Posterior cingulate gyrus (tissue), 11 donors: ENCODE measurements at regions of chr14 and their contacts with region 1.

Region 1: GRCh38 chr14:100375963-100376735 is 53.0 kb downstream of the SLC25A47 start:
- DNase-seq: peak; percentile 83 to 98 (median 89)

Region 2: GRCh38 chr14:100285021-100285912 is 90.9 kb before region 1 on chr14:
- intact Hi-C with region 1: loop called (anchors 5 kb)
- DNase-seq: peak in 7 of 10 donors; percentile 51 to 95 (median 76)

Region 3: DNA sequence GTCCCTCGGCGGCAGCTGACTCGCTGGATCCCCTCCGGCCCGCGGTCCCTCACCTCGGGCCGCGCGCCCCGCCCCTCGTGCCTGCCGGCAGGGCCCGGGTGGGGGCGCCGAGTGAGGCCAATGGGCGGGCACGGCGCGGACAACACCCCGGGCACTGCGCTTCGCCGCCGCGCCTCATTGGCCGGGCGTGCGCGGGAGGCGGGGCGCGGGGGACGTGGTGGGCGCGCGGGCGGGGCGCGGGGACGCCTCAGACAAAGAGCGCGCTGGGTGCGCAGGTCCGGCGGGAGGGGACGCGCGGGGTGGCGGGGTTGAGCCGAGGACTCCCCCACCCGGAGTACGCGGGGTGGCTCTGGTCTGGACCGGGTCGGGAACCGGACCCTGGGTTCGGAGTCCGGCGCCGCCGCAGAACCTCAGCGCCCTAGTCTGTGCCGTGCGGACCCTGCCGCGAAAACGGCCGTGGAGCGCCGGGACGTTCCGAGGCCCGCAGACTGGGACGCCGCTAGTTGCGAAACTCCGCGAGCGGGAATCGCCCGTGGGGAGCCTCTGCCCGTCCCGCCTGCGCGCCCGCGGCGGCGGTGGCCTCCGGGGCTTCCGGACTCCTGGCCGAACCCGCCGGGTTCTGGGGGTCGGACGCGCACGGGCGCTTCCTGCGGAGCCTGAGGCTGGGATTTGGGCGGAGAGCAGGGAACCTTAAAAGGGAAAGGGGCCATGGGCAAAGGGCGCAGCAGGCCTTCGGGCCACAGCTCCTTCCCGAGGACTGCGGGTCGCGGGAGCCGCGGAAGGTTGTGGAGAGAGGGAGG is 69.5 kb before region 1 on chr14 and contains the start of gene SLC25A29:
- intact Hi-C with region 1: loop called (anchors 5 kb)
- DNase-seq: peak; percentile 86 to 99 (median 91)

Region 4: DNA sequence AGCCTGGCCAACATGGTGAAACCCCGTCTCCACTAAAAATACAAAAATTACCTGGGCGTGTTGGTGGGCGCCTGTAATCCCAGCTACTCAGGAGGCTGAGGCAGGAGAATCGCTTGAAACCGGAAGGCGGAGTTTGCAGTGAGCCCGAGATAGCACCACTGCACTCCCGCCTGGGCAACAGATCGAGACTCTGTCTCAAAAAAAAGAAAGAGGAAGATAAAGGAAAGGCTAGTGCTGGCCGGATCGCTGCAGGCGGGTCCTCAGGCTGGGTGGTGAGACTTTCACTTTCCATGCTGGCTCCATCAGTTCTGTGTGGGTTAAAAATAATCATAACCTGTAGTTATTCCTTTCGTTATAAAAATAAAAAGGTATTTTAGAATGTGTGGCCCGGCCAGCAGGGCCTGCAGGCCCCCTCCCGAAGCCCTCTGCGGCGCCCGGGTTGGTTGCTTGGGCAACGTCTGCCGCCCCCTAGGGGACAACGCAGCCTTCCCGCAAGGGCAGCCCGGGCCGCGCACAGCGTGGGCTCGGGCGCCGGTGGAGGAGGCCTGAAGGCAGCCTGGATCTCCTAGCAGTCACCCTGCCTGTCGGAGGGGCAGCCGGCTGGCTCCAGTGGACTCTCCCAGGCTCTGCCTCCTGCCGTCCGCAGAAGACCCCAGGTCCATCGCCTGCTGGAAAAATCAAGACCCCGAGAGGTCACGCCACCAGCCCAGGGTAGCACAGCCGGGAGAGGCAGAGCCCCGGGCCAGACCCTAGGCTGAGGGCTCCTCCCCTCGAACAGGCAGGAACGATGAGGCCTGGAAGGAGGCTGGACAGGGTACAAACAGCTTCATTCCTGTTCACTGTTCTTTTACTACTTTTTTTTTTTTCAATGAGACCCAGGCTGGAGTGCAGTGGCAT is 58.0 kb before region 1 on chr14:
- intact Hi-C with region 1: no loop called
- DNase-seq: peak in 5 of 10 donors; percentile 45 to 91 (median 52)

Region 5: DNA sequence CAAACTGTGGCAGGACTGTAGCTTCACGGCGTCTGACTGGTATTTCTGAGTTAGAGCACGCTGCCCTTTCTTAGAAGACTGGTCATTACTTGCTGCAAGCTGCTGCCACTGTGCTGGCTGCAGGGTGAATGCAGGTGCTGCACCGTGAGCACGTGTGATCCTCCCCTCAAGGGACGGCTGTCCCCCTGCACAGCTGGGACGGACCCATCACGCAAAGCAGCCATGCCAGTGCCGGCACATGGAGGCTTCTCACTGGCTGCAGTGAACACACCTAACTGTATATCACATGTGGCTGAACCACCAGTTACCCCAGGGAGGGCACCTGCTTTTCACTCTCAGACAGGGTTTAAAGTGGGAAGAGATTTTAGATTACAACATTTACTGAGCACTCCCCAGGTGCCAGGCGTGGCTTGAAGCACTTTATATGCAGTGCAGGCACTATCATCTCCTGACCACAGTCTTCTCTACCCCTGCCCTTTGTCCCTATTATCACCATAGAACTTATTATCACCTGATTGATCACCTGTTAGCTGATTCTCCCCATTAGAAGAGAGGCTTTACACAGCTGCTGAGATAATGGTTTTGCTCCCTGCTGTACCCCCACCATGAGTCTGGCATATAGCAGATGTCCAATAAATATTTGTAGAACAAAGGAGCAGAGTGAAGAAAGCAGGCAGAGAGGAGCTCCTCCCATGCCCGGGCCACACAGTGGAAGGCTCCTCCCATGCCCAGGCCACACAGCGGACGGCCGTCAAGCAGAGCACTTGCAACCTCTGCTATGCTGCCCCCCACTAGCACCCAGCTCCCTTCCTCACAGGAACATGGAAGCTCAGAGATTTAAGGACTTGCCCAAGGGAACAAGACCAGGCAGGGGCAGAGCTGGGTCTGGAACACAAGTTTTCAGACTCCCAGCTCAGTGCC is 27.1 kb before region 1 on chr14:
- intact Hi-C with region 1: no loop called
- DNase-seq: no peak